ENCODE measurements at regions of chr2 and their contacts with region 1.

Region 1: GRCh38 chr2:126322342-126322741 is 333.6 kb upstream of the GYPC start:
- DNase-seq: no peak
- ATAC-seq: no peak
- H3K4me3 ChIP-seq: no peak overlapping the region
- H3K27ac ChIP-seq: no peak overlapping the region
- H3K4me1 ChIP-seq: no peaks in the 10 kb centered on the region
- H3K27me3 ChIP-seq: no peaks in the 10 kb centered on the region
- CTCF ChIP-seq: no peak
- POLR2A ChIP-seq: no peak
- RAD21 ChIP-seq: no peak

Region 2: DNA sequence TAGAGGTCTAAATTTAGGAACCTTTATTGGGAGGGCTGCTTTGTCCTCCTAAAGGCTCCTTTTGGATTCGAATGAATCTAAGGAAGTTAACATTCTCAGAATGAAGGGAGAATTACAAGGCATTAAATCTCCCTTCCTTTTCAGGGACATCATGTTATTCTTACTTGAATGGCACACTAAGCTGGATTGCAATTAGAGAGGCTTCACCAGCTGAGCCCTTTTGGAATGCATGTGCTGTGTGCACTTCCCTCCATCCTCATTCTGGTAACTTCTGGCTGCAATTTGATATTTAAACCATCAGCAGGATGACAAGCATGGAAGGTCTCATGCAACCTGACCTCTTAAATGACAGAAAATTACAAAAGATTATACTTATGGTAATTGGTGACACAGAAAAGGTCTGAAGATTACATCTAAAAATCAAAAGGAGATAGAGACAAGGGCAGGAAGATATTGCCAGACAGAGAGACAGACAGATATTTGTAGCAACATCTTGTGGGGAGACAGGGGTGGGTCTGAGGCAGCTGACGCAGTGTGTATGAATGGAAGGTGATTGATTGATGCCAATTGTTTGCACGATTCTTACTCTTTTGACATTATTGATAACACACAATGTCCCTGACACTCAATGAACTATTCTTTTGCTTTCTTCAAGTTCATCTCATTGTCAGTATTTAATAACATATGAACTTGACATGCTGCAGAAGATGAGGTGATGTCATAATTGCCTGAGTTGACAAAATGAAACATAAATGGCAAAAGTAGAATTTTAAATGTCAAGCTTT is 237.1 kb before region 1 on chr2:
- CTCF ChIA-PET with region 1: no interaction called
- POLR2A ChIA-PET with region 1: no interaction called
- RAD21 ChIA-PET with region 1: no interaction called
- intact Hi-C with region 1: no loop called
- DNase-seq: no peak
- ATAC-seq: no peak
- H3K4me3 ChIP-seq: no peak overlapping the region
- H3K27ac ChIP-seq: no peak overlapping the region
- H3K4me1 ChIP-seq: no peaks in the 10 kb centered on the region
- H3K27me3 ChIP-seq: no peaks in the 10 kb centered on the region
- CTCF ChIP-seq: no peak
- POLR2A ChIP-seq: no peak
- RAD21 ChIP-seq: no peak

Region 3: DNA sequence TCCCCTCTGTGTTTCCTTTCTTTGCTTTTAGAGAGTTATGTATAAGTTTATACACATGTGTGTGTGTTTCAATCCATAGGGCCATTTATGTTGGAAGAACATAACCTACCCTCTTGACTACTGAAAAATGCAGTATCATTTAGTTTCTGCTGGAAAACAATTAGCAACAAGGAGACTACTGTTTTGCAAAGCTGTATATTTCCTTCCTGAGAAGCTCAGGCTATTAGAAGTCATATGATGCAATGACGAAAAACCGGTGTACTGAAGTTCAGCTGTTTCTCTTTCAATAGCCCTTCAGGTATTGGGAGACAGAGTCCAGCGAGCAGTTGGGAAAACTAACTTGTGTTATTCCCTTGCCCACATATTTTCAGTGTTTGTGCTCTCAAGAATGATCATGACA is 114.1 kb before region 1 on chr2:
- CTCF ChIA-PET with region 1: no interaction called
- POLR2A ChIA-PET with region 1: no interaction called
- RAD21 ChIA-PET with region 1: no interaction called
- intact Hi-C with region 1: no loop called
- DNase-seq: no peak
- ATAC-seq: no peak
- H3K4me3 ChIP-seq: no peak overlapping the region
- H3K27ac ChIP-seq: no peak overlapping the region
- H3K4me1 ChIP-seq: no peaks in the 10 kb centered on the region
- H3K27me3 ChIP-seq: no peaks in the 10 kb centered on the region
- CTCF ChIP-seq: no peak
- POLR2A ChIP-seq: no peak
- RAD21 ChIP-seq: no peak

Region 4: DNA sequence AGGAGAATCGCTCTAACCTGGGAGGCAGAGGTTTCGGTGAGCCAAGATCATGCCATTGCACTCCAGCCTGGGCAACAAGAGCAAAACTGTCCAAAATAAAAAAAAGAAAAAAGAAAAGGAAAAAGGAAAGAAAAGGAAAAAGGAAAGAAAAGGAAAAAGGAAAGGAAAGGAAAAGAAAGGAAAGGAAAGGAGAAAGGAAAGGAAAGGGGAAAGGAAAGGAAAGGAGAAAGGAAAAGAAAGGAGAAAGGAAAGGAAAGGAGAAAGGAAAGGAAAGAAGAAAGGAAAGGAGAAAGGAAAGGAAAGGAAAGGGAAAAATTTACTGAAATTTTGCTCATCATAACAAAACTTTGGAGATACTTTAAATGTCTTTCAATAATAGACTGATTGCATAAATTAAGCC is 57.7 kb before region 1 on chr2:
- CTCF ChIA-PET with region 1: no interaction called
- POLR2A ChIA-PET with region 1: no interaction called
- RAD21 ChIA-PET with region 1: no interaction called
- intact Hi-C with region 1: loop called (anchors 5 kb)
- DNase-seq: no peak
- ATAC-seq: no peak
- H3K4me3 ChIP-seq: no peak overlapping the region
- H3K27ac ChIP-seq: no peak overlapping the region
- H3K4me1 ChIP-seq: no peaks in the 10 kb centered on the region
- H3K27me3 ChIP-seq: no peaks in the 10 kb centered on the region
- CTCF ChIP-seq: no peak
- POLR2A ChIP-seq: no peak
- RAD21 ChIP-seq: no peak

Measured in HCT116 (cell line).